B cell (primary cell): ENCODE measurements at regions of chr19 and their contacts with region 1.

Region 1: GRCh38 chr19:2302319-2303210 is 5.4 kb downstream of the LINGO3 start:
- DNase-seq: peak; percentile 78
- ATAC-seq: peak; percentile 48
- H3K4me3 ChIP-seq: peak overlapping the region in 4 of 5 experiments; percentile 25 to 65 (median 43)
- H3K4me3 Mint-ChIP-seq: peak overlapping the region; percentile 87
- H3K27ac ChIP-seq: peak overlapping the region; percentile 64 to 78
- H3K27ac Mint-ChIP-seq: peak overlapping the region; percentile 86
- H3K4me1 ChIP-seq: peaks cover 45 to 66% of the 10 kb centered on the region in 2 donors
- H3K4me1 Mint-ChIP-seq: peaks cover 43% of the 10 kb centered on the region
- H3K27me3 ChIP-seq: peaks cover 0 to 18% (median 5%) of the 10 kb centered on the region in 4 experiments
- H3K27me3 Mint-ChIP-seq: peaks cover 4% of the 10 kb centered on the region
- CTCF ChIP-seq: no peak

Region 2: GRCh38 chr19:2261438-2262172 is 41.0 kb before region 1 on chr19:
- CTCF ChIA-PET with region 1: no interaction called
- POLR2A ChIA-PET with region 1: interaction called, 15 read pairs
- intact Hi-C with region 1: no loop called
- DNase-seq: no peak
- ATAC-seq: no peak
- H3K4me3 ChIP-seq: no peak overlapping the region
- H3K4me3 Mint-ChIP-seq: peak overlapping the region; percentile 55
- H3K27ac ChIP-seq: no peak overlapping the region
- H3K27ac Mint-ChIP-seq: peak overlapping the region; percentile 85
- H3K4me1 ChIP-seq: peaks cover 54 to 88% of the 10 kb centered on the region in 2 donors
- H3K4me1 Mint-ChIP-seq: peaks cover 50% of the 10 kb centered on the region
- H3K27me3 ChIP-seq: no peaks in the 10 kb centered on the region
- H3K27me3 Mint-ChIP-seq: no peaks in the 10 kb centered on the region
- CTCF ChIP-seq: peak; percentile 54

Region 3: GRCh38 chr19:2328401-2329148 is 26.0 kb after region 1 on chr19 and contains the starts of genes LSM7 and SPPL2B:
- CTCF ChIA-PET with region 1: no interaction called
- POLR2A ChIA-PET with region 1: interaction called, 14 read pairs
- intact Hi-C with region 1: no loop called
- DNase-seq: peak; percentile 95
- ATAC-seq: peak; percentile 42
- H3K4me3 ChIP-seq: peak within 1 kb of the TSS; percentile 66 to 97 (median 92)
- H3K4me3 Mint-ChIP-seq: peak within 1 kb of the TSS; percentile 96
- H3K27ac ChIP-seq: peak within 1 kb of the TSS; percentile 71 to 90
- H3K27ac Mint-ChIP-seq: peak within 1 kb of the TSS; percentile 98
- H3K4me1 ChIP-seq: peaks cover 81 to 92% of the 10 kb centered on the region in 2 donors
- H3K4me1 Mint-ChIP-seq: peaks cover 81% of the 10 kb centered on the region
- H3K27me3 ChIP-seq: no peaks in the 10 kb centered on the region
- H3K27me3 Mint-ChIP-seq: no peaks in the 10 kb centered on the region
- CTCF ChIP-seq: no peak
- total RNA-seq, gene LSM7: 180 and 201 TPM in 2 replicates
- total RNA-seq, gene SPPL2B: 479 and 511 TPM in 2 replicates